ENCODE measurements at regions of chr16 and their contacts with region 1.

Region 1: GRCh38 chr16:19717771-19718602 is at the starts of genes IQCK and KNOP1:
- DNase-seq: peak; percentile 94 to 97
- ATAC-seq: peak; percentile 96
- H3K4me3 ChIP-seq: peak within 1 kb of the TSS; percentile 71 to 91
- H3K27ac ChIP-seq: peak within 1 kb of the TSS; percentile 3 to 41
- H3K4me1 ChIP-seq: no peaks in the 10 kb centered on the region
- H3K27me3 ChIP-seq: no peaks in the 10 kb centered on the region
- total RNA-seq, gene IQCK: 5.0 to 10.0 TPM
- total RNA-seq, gene KNOP1: 7.6 to 11.6 TPM

Region 2: DNA sequence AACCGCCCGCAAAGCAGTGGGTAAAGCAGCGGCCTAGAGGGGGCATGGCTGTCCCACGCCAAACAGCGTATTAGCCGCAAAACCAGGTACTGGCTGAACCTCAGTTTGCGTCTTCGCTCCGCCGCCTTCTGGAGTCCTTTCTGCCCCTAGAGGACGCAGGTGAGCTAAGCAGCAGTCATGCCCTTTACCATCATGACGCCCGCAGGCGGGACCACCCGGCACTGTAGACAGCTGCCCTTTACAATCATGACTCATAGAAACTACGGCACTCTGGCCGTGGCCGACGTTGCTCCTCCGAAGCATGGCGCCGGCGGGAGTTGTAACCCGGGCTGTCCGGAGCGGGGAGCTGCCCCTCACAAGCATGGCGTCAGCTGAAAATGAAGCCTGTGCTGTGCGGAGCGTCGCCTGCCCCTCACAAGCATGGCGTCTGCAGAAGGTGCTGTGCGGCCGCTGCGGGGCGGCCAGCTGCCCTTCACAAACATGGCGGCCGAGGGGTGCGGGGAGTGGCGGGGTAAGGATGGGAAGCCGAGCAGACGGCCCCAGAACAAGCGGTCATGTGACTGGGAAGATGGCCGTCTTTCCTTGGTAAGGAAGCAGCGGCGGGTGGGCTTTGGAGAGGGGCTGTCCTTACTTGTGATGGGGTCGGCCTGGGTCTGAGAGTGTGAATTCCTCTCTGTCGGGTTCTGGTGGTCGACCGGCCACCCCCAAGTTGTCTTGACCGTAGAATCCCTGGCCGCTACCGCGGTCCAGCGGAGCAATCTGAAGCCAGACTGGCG is 162.6 kb before region 1 on chr16 and contains the start of gene VPS35L:
- intact Hi-C with region 1: loop called in 1 of 2 experiments (anchors 10 kb)
- DNase-seq: peak; percentile 99 to 100
- ATAC-seq: peak; percentile 100
- H3K4me3 ChIP-seq: peak within 1 kb of the TSS; percentile 51
- H3K27ac ChIP-seq: peak within 1 kb of the TSS in 1 of 2 donors; percentile 39
- H3K4me1 ChIP-seq: no peaks in the 10 kb centered on the region
- H3K27me3 ChIP-seq: no peaks in the 10 kb centered on the region
- total RNA-seq, gene VPS35L: 48.8 to 66.8 TPM